Posterior vena cava (tissue), 2 donors: ENCODE measurements at regions of chr16 and their contacts with region 1.

Region 1: DNA sequence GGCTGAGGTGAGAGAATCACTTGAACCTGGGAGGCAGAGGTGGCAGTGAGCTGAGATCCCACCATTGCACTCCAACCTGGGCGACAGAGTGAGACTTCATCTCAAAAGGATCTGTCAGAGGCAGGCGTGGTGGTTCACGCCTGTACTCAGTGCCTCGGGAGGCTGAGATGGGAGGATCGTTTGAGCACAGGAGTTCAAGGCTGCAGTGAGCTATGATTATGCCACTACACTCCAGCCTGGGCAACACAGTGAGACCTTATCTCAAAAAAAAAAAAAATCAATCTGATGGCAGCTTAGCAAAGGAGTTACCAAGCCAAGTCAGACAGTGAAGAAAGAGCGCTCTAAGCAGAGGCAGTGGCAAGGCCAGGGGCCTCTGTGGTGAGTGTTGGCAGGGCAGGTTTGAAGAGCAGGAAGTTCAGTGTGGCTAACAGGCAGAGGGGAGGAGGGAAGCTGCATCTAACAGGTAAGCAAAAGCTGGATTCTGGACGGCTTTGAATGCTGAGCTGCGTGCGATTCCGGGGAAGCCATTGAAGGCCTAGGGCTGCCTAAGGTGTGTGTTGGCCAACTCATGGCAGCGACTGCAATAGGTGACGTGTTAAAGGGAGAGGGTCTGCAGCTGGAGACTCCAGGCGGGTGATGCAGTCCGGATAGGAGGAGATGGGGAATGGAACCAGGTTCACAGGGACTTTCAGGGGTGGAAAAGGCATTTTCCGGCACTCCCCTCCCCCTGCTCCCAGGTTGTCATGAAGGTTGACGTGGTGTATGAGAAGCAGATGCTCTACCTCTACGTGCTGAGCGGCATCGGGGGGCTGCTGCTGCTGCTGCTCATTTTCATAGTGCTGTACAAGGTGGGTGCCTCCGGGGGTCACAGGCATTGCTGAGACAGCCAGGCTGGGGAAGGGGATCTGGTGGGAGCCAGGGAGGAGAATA is 7.0 kb downstream of the ZNF768 start:
- DNase-seq: no peak

Region 2: DNA sequence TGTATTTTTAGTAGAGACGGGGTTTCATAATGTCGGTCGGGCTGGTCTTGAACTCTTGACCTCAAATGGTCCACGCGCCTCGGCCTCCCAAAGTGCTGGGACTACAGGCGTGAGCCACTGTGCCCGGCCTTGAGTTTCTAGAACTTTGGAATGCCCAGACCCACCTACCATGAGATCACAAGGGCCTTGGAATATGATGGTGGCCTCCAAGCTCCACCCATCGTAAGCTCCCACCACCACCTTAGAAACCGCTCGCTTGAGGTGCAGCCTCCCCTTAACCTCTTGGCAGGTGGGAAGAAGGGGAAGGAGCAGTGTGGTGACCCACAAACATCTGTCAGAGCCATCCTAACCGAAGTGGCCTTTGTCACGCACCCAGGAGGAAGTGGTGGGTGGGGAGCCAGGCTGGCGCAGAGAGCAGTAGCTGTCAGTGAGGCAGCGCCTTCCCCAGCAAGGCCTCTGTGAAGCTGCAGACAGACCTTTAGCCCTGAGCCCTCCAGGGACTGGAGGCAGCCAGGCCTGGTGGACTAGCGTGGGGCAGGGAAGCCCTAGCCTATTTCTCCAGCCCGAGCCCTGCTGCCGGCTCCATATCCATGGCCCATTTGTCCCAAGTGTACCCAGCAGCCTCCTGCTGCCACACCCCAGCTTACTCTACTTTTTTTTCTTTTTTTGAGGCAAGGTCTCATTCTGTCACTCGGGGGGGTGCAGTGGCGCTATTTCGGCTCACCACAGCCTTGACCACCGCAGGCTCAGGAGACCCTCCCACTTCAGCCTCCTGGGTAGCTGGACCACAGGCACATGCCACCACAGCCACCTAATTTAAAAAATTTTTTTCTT is 60.6 kb before region 1 on chr16:
- intact Hi-C with region 1: loop called in 1 of 2 experiments (anchors 10 kb)
- DNase-seq: no peak

Region 3: DNA sequence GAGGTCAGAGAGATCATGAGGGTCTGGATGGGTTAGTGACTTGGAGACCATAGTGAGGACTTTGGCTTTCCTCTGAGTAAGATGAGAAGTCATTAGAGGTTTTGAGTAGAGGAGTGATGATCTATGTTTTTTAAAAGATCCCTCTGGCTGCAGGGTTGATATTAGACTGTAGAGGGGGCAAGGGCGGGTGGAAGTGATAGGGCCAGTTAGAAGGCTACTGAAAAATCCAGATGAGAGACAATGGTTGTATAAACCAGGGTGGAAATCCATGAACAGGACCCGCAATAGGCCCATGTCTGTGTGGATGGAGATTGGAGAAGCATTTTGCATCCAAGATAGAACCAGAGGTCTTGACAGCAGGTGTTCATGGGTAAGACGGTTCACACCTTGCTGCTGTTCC is 37.0 kb before region 1 on chr16:
- intact Hi-C with region 1: no loop called
- DNase-seq: no peak

Region 4: DNA sequence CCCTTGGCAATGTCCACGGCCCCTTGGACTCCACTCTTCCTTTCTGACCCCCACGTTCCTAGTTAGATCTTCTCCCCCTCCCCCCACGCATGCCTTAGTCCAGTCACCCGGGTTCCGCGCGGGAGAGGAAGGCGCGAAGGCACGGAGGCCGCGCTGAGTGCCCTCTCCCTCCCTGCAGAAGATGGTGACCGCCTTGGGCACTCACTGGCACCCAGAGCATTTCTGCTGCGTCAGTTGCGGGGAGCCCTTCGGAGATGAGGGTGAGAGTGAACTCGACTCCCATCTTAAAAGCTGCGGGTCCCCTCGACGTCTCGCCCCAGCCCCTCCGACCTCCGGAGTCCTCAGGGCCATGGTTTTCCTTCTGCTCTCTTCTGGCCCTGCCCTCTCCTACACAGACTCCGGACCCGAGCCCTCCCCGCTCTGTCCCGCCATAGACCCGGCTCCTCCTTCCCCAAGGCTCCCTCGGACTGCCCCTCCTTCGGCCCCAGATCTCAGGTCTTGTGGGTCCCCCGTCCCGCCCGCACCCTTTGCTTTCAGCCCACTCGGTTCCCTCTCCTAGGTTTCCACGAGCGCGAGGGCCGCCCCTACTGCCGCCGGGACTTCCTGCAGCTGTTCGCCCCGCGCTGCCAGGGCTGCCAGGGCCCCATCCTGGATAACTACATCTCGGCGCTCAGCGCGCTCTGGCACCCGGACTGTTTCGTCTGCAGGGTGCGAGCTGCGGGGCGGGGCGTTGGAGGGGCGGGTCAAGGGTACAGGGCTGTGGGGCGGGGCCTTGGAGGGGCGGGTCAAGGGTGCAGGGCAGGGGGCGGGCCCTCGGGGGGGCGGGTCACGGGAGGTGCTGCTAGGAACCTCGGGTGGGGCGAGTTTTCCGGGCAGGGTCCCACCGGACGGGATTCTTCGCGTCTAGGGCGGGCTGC is 957.2 kb after region 1 on chr16:
- intact Hi-C with region 1: loop called in 1 of 2 experiments (anchors 5 kb)
- DNase-seq: peak; percentile 94